Activated naive CD4-positive, alpha-beta T cell treated with anti-CD3 and anti-CD28 coated beads, Interleukin-2, amount 10 ng/mL, durations not matched to agents 7 days and 5 days (primary cell): ENCODE measurements at regions of chr19 and their contacts with region 1.

Region 1: DNA sequence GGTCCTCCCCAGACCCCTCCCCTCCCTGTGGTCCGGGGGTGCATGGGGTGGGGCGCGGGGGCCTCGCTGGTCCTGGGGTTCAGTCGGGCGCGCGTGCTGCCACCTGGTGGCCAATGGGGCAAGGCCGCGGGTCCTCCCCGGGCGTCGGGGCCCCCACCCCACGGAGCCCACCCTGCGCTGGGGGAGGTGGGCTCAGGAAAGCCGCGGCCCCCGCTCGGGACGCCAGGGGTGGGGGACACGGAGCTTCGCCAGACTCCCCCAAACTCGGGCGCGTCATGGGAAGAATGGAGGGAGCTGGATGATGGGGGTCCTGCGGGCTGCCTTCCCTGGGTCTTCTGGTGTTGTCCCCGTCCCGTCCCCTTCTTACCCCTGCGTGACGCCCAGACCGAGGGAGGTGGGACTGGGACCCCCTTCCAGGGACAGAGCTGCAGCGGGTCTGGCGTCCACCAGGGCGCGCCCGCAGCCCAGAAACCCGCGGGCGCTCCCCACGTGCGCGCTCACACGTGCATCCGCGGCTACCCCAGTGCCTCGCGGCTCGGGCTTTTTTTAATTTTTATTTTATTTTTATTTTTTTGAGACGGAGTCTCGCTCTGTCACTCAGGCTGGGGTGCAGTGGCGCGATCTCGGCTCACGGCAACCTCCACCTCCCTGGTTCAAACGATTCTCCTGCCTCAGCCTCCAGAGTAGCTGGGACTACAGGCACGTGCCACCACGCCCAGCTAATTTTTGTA is 19.8 kb upstream of the TCF3 start:
- DNase-seq: peak; percentile 69
- H3K4me3 Mint-ChIP-seq: no peak overlapping the region
- H3K27ac Mint-ChIP-seq: no peak overlapping the region
- H3K4me1 Mint-ChIP-seq: peaks cover 12% of the 10 kb centered on the region
- H3K27me3 Mint-ChIP-seq: peaks cover 95% of the 10 kb centered on the region

Region 2: DNA sequence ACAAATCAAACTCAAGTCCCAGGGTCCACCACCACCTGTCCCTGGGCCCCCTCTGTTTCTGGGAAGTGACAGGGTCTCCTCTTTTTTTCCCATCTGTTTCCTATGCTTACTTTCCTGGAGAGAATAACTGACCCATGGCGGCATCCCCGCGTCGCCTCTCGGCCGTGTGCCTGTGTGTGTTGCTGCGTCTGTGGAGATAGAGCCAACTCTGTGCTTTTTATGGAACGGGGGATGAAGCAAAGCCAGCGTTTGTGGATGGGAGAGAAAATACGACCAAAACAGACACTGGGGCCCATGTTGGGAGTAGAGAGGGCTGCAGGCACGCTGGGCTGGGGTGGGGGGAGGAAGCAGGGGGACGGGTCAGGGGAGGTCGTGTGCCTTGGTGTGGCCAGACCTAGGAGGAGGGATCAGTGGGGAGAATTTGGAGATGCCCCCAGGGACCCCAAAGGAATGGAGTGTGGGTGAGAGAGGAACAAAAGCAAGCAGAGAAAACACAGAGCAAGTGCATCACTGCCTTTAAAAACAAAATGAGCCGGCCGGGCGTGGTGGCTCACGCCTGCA is 131.8 kb before region 1 on chr19:
- CTCF ChIA-PET with region 1: interaction called, 25 read pairs
- DNase-seq: no peak
- H3K4me3 Mint-ChIP-seq: no peak overlapping the region
- H3K27ac Mint-ChIP-seq: no peak overlapping the region
- H3K4me1 Mint-ChIP-seq: no peaks in the 10 kb centered on the region
- H3K27me3 Mint-ChIP-seq: peaks cover 58% of the 10 kb centered on the region

Region 3: DNA sequence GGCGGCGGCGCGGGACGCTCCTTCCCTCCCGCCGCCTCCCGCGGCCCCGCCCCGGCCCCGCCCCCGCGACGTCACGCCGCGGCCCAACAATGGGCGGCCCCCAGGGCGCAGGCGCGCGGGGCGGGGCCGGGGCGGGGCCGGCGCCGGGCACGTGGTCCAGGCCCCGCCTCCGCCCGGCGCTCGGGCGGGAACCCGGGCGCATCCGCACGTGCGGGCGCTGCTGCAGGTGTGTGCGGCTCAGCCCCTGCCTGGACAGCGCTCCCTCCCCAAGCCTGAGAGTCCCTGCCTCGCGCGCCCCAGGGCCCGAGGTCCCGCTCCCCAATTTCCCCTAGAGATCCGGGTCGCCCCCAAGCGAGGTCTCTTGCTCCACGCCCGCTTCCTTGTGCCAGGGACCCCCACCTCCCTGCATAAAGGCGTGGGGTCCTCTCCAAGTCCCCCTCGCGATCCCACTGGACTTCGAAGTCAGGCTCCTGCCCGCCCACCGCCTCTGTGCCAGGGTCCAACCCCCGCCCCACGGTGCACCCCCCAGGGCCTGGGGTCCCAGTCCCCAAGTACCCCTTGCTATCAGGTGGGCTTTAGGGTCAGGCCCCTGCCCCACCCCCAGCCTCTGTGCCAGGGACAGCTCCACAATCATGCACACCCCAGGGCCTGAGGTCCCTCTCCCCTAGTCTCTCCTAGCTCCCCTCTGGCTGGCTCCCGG is 103.7 kb before region 1 on chr19 and contains the start of gene MEX3D:
- CTCF ChIA-PET with region 1: no interaction called
- DNase-seq: peak; percentile 85
- H3K4me3 Mint-ChIP-seq: peak within 1 kb of the TSS; percentile 48
- H3K27ac Mint-ChIP-seq: peak within 1 kb of the TSS; percentile 37
- H3K4me1 Mint-ChIP-seq: peaks cover 5% of the 10 kb centered on the region
- H3K27me3 Mint-ChIP-seq: peaks cover 66% of the 10 kb centered on the region

Region 4: GRCh38 chr19:1605236-1606137 is 66.7 kb before region 1 on chr19 and contains the start of gene UQCR11:
- CTCF ChIA-PET with region 1: interaction called, 12 read pairs
- DNase-seq: peak; percentile 95
- H3K4me3 Mint-ChIP-seq: peak within 1 kb of the TSS; percentile 88
- H3K27ac Mint-ChIP-seq: peak within 1 kb of the TSS; percentile 99
- H3K4me1 Mint-ChIP-seq: peaks cover 57% of the 10 kb centered on the region
- H3K27me3 Mint-ChIP-seq: no peaks in the 10 kb centered on the region

Region 5: GRCh38 chr19:1767464-1767933 is 95.3 kb after region 1 on chr19:
- CTCF ChIA-PET with region 1: interaction called, 22 read pairs
- DNase-seq: peak; percentile 69
- H3K4me3 Mint-ChIP-seq: no peak overlapping the region
- H3K27ac Mint-ChIP-seq: no peak overlapping the region
- H3K4me1 Mint-ChIP-seq: peaks cover 2% of the 10 kb centered on the region
- H3K27me3 Mint-ChIP-seq: peaks cover 96% of the 10 kb centered on the region

Region 6: DNA sequence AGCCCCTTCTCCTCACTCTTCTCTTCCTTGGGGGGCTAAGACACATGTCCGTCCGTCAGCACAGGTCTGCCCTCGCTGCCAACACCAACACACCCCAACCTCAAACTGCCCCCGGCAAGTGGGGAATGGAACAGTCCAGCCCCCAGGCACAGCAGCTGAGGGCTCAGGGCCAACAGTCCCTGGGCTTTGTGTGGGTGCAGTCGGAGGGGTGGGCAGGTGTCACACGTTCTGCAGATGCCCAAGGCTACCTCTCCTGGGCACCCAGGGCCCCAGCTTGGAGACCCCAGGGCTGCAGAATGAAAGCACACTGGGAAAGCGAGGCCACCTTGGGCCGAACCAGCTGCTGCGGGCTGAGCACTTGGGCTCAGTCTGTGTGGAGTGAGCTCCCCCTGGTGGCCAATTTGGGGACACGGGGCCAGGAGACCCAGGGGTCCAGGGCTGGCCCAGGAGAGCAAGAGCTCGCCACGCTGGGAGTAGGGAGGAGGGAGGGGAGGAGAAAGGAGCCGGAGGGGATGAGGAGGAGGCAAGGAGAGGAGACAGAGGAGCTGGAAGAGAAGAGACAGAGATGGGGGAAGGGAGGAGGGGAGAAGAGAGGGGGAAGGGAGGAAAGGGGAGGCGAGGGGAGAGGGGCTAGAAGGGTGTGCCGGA is 153.8 kb after region 1 on chr19:
- CTCF ChIA-PET with region 1: interaction called, 16 read pairs
- DNase-seq: peak; percentile 85
- H3K4me3 Mint-ChIP-seq: no peak overlapping the region
- H3K27ac Mint-ChIP-seq: no peak overlapping the region
- H3K4me1 Mint-ChIP-seq: peaks cover 4% of the 10 kb centered on the region
- H3K27me3 Mint-ChIP-seq: no peaks in the 10 kb centered on the region